HepG2 (cell line): ENCODE measurements at regions of chr4 and their contacts with region 1.

Region 1: DNA sequence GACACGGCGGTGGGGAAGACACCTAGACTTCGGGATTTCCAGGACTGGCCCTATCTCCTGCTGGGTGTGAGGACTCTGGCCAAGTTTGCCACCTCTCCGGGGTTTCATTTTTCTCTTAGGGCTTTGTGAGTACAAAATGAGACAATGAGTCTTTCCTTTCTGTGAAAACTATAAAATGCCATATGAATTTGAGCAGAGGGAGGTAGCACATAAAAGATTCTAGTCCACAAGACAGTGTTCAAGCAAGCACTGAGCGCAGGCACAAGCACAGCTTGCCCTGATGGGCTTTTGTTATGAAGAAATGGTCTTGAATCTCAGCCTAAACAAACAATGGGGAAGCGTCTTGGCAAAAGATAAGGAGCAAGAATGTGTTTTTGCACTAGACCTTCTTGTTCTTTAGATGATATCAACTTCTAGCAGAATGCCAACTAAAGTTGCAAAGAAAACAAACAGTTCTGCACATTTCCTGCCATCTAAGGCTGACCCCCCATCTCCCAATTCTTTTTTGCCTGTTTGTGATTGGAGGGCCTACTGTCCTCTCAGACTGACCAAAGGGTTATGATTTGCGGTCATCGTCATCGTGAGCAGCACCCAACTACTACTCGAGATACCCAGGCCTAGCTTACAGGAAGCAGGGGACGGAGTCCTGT is 73.0 kb upstream of the ZNF518B start:
- DNase-seq: no peak
- ATAC-seq: no peak
- H3K4me3 ChIP-seq: no peak overlapping the region
- H3K27ac ChIP-seq: no peak overlapping the region
- H3K4me1 ChIP-seq: no peaks in the 10 kb centered on the region
- H3K27me3 ChIP-seq: no peaks in the 10 kb centered on the region; a peak in 1 of 5 replicates
- CTCF ChIP-seq: no peak
- EP300 ChIP-seq: no peak
- POLR2A ChIP-seq: no peak
- RAD21 ChIP-seq: no peak

Region 2: DNA sequence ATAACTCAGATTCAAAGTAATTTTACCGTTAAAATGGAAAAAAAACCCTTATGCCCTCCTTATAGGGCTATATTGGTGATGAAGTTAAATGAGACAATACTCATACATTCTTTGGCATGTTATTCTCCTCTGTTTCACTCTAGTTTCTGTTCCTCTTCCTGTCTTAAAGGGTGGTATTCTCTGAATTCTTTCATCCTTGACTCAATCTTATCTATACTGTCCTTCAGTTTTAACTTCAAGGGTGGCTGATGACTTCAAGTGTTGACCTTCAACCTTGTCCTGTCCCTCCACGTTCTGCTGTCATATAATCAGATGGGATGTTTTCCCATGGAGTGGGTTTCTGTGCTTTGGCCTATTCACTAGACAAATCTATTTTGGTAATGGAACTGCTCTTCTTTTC is 117.1 kb before region 1 on chr4:
- CTCF ChIA-PET with region 1: no interaction called
- POLR2A ChIA-PET with region 1: no interaction called
- in situ Hi-C with region 1: no loop called
- intact Hi-C with region 1: loop called (anchors 10 kb)
- DNase-seq: no peak
- ATAC-seq: no peak
- H3K4me3 ChIP-seq: no peak overlapping the region
- H3K27ac ChIP-seq: no peak overlapping the region
- H3K4me1 ChIP-seq: no peaks in the 10 kb centered on the region
- H3K27me3 ChIP-seq: no peaks in the 10 kb centered on the region; a peak in 1 of 5 replicates
- CTCF ChIP-seq: no peak
- EP300 ChIP-seq: no peak
- POLR2A ChIP-seq: no peak
- RAD21 ChIP-seq: no peak

Region 3: DNA sequence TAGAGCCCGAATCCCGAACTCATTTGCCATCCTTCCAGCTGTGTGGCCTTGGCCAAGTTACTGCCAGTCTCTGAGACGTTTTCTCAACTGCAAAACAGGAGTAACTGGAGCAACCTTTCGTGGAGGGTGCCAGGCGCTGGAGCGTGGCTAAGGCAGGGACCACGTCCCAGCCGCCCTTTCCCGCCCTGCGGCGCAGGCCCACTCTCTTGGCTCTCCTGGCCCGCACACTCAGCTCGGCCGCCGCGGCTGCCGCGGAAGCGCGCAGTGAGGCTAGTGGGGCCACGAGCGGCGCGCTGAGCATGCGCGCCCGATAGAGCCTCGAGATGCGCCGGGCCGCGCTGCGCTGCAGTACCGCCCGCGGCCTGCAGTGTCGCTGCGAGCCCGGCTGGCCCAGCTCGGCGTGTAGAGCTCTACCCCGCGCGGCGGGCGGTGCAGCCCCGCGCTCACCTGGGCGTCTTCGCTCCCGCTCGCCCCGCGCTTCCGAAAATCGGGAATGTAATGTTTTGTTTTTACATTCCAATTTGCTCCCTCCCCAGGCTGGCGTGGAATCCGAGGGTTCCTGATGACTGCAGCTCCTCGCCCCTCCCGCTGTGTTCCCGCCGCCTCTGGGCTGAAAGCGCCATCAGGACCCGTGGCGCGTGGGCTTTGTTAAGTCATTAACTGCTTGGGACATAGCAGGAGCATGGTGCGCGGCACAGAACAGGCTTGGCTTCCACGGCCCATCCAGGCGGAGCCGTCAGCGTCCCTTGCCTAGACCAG is 69.0 kb before region 1 on chr4:
- CTCF ChIA-PET with region 1: no interaction called
- POLR2A ChIA-PET with region 1: no interaction called
- in situ Hi-C with region 1: no loop called
- intact Hi-C with region 1: loop called (anchors 10 kb)
- DNase-seq: no peak
- ATAC-seq: peak; percentile 98
- H3K4me3 ChIP-seq: no peak overlapping the region
- H3K27ac ChIP-seq: no peak overlapping the region
- H3K4me1 ChIP-seq: no peaks in the 10 kb centered on the region
- H3K27me3 ChIP-seq: peaks cover 0 to 4% of the 10 kb centered on the region in 2 experiments; a peak in 1 of 5 replicates
- CTCF ChIP-seq: peak; percentile 57
- EP300 ChIP-seq: no peak
- POLR2A ChIP-seq: no peak
- RAD21 ChIP-seq: peak; percentile 43; the same call in 1 of the 2 replicates

Region 4: DNA sequence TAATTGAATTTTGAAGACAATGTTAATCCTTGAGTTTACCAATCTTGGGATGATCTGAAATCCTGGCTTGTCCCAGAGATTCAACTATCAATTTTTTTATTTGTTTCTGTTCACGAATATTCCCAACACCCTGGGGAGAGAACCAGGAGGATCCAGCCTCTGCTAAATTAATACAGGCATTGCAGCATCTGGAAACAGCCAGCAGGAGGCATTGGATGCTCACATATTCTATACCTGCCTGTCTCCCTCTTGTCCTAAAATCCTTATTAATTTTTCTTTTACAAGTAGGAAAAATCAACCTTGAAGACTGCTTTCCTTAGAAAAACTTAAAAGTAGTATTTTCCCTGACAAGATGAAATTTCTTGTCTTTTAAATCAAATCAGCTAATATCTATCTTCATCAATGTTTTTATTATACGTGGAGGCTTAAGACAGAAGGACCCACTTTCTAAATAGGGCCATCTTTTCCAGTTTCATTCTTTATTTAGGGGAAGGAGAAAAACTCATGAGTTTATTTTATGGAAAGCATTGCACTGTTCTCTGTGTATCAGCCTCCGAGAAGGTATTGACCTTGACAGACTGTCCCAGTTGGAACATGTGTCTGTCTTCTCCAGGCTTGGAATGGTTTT is 51.9 kb after region 1 on chr4:
- CTCF ChIA-PET with region 1: no interaction called
- POLR2A ChIA-PET with region 1: no interaction called
- in situ Hi-C with region 1: no loop called
- intact Hi-C with region 1: no loop called
- DNase-seq: peak; percentile 12
- ATAC-seq: peak; percentile 82
- H3K4me3 ChIP-seq: no peak overlapping the region
- H3K27ac ChIP-seq: no peak overlapping the region
- H3K4me1 ChIP-seq: no peaks in the 10 kb centered on the region
- H3K27me3 ChIP-seq: no peaks in the 10 kb centered on the region
- CTCF ChIP-seq: peak; percentile 71
- EP300 ChIP-seq: no peak
- POLR2A ChIP-seq: no peak
- RAD21 ChIP-seq: peak; percentile 48